ENCODE measurements at regions of chr4 and their contacts with region 1.

Region 1: GRCh38 chr4:26325191-26325590 is 4.4 kb downstream of the RBPJ start:
- DNase-seq: peak; percentile 50 to 59 (median 56)
- H3K4me3 ChIP-seq: no peak overlapping the region
- H3K4me3 Mint-ChIP-seq: peak overlapping the region; percentile 4 to 55 (median 23)
- H3K27ac ChIP-seq: no peak overlapping the region
- H3K27ac Mint-ChIP-seq: peak overlapping the region; percentile 49 to 81 (median 75)
- H3K4me1 ChIP-seq: peaks cover 43% of the 10 kb centered on the region
- H3K4me1 Mint-ChIP-seq: peaks cover 38 to 54% (median 44%) of the 10 kb centered on the region in 4 donors
- H3K27me3 ChIP-seq: no peaks in the 10 kb centered on the region
- H3K27me3 Mint-ChIP-seq: no peaks in the 10 kb centered on the region

Region 2: GRCh38 chr4:25862411-25863346 is 462.5 kb before region 1 on chr4 and contains the start of gene SEL1L3:
- CTCF ChIA-PET with region 1: interaction called, 8 read pairs
- POLR2A ChIA-PET with region 1: interaction called, 9 read pairs
- intact Hi-C with region 1: loop called (anchors 2 kb)
- DNase-seq: peak; percentile 31 to 54 (median 43)
- H3K4me3 ChIP-seq: peak within 1 kb of the TSS; percentile 71 to 74
- H3K4me3 Mint-ChIP-seq: peak within 1 kb of the TSS; percentile 95 to 100 (median 98)
- H3K27ac ChIP-seq: peak within 1 kb of the TSS; percentile 87
- H3K27ac Mint-ChIP-seq: peak within 1 kb of the TSS; percentile 92 to 99 (median 94)
- H3K4me1 ChIP-seq: peaks cover 48% of the 10 kb centered on the region
- H3K4me1 Mint-ChIP-seq: peaks cover 33 to 50% (median 41%) of the 10 kb centered on the region in 4 donors
- H3K27me3 ChIP-seq: no peaks in the 10 kb centered on the region
- H3K27me3 Mint-ChIP-seq: no peaks in the 10 kb centered on the region
- total RNA-seq, gene SEL1L3: 61.4 to 64.3 TPM

Region 3: DNA sequence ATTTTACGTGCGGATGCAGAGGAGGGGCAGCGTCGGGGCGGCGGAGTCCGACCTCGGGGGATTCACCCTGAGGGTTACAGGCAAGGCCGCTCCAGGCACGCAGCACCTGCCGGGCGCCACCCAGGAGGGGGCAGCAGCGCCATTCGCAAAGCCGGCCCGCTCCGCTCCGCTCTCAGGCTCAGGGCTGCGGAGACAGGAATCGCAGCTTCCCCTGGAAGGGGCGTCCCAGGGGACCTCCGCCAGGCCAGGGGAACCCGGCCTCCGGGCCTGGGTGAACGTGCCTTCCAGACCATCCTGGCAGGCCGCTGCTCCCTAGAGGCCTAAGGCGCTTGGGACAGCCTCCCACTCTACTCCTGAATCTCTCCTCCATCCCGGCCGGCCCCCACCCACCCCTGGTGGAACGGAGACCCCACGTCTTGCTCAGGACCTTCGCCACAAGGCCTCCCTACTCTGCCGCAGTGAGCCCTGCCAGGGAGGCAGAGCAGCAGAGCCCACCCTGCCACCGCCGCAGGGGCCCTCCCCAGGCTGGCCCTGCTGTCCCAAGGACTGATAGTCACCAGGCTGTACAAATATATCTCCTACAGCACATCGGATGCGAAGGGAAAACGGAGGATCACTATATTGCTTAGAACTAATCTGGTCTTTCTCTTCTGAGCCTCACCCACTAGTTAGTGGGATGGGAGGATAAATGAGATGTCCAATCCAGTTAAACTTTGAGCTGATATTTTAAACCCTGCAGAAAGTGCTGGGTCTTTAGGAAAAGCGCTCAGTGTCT is 296.2 kb before region 1 on chr4:
- CTCF ChIA-PET with region 1: interaction called, 16 read pairs
- POLR2A ChIA-PET with region 1: no interaction called
- intact Hi-C with region 1: loop called (anchors 1 kb)
- DNase-seq: peak in 4 of 5 donors; percentile 37 to 49 (median 45)
- H3K4me3 ChIP-seq: no peak overlapping the region
- H3K4me3 Mint-ChIP-seq: peak overlapping the region in 1 of 8 donors; percentile 24
- H3K27ac ChIP-seq: no peak overlapping the region
- H3K27ac Mint-ChIP-seq: no peak overlapping the region
- H3K4me1 ChIP-seq: no peaks in the 10 kb centered on the region
- H3K4me1 Mint-ChIP-seq: peaks cover 0 to 2% (median under 1%) of the 10 kb centered on the region in 4 donors
- H3K27me3 ChIP-seq: no peaks in the 10 kb centered on the region
- H3K27me3 Mint-ChIP-seq: peaks cover 5 to 6% of the 10 kb centered on the region in 2 donors

Region 4: DNA sequence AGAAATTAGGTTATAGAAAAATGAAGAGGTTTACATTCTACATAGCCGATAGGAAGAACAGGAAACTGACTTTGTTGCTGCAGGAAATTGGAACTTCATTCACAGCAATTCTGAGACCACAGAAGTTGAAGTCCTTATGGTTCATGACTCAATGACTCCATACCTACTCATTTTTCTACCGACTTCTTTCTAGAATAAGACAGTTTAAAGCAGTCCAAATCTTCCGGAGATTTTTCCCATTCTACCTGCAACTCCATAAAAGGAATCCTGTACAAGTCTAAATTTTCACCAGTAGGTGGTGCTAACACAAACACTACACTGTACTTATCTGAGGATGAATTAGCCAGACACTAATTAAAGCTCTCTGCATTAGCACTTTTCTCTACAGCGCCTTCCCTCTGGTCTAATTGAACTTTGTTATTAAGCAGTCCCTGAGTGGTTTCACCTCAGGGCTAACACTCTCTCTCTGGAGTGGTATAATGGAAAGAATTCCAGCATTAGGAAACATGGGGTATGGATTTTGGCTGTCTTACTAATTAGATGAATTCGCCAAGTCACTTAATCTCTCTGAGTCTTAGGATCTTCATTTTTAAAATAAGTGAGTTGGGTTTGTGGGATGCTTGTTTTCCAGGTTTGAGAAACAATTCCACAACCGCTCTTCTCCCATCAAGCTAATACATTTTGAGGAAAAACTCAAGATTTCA is 243.2 kb before region 1 on chr4:
- CTCF ChIA-PET with region 1: interaction called, 223 read pairs
- POLR2A ChIA-PET with region 1: interaction called, 20 read pairs
- intact Hi-C with region 1: loop called (anchors 1 kb)
- DNase-seq: peak in 4 of 5 donors; percentile 40 to 55 (median 44)
- H3K4me3 ChIP-seq: no peak overlapping the region
- H3K4me3 Mint-ChIP-seq: peak overlapping the region in 2 of 8 donors; percentile 40 to 47
- H3K27ac ChIP-seq: no peak overlapping the region
- H3K27ac Mint-ChIP-seq: peak overlapping the region in 5 of 7 donors; percentile 4 to 62 (median 31)
- H3K4me1 ChIP-seq: peaks cover 9% of the 10 kb centered on the region
- H3K4me1 Mint-ChIP-seq: peaks cover 9 to 18% (median 15%) of the 10 kb centered on the region in 4 donors
- H3K27me3 ChIP-seq: no peaks in the 10 kb centered on the region
- H3K27me3 Mint-ChIP-seq: no peaks in the 10 kb centered on the region